Caco-2 (cell line): ENCODE measurements at regions of chr11 and their contacts with region 1.

Region 1: GRCh38 chr11:61254403-61255025 is 13.5 kb downstream of the PGA5 start:
- DNase-seq: peak; percentile 69 to 78
- H3K4me3 ChIP-seq: no peak overlapping the region
- H3K4me3 Mint-ChIP-seq: no peak overlapping the region
- H3K27ac Mint-ChIP-seq: no peak overlapping the region
- H3K4me1 ChIP-seq: no peaks in the 10 kb centered on the region
- H3K4me1 Mint-ChIP-seq: no peaks in the 10 kb centered on the region
- H3K27me3 ChIP-seq: no peaks in the 10 kb centered on the region
- H3K27me3 Mint-ChIP-seq: no peaks in the 10 kb centered on the region
- CTCF ChIP-seq: peak; percentile 92 to 96

Region 2: DNA sequence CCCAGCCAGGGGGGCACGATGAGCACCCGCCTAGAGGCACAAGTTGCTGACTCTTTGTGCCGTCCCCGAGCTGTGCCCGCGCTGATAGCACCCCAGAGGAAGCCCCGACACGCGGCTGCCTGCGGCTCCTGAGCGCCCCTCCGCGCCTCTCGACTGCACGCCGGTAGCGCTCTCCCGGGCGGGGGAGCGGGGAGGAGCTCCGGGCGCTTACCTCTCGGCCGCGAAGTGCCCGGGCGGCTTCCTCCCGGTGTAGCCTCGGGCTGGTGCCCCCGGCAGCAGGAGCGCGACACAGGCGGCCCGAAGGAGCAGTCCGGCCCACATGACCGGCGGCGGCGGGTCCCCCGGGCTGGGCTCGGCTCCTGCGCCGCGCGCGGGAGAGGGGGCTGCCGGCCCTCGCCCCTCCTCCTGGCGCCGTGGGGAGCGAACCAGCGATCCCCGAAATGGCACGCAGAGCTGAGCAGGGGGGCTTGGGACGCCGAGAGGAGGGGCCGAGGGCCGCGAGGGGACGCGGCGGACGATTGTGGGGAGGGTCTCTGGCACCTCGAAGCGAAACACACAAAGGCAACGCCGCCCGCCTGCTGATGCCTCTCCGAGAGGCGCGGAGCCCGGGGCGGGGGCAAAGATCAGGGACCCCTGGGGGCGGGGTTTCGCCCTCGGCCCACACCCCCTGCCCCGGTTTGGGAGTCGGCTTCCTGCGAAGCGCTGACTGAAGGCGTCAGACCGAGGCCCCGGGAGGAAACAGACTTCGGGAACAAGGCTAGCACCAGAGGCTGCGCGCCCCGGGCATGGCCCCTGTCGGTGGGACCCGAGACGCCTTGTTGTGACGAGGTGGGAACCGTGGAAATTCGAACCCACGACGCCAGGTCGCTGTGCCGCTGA is 40.4 kb after region 1 on chr11 and contains the start of gene VWCE:
- CTCF ChIA-PET with region 1: interaction called, 4 read pairs
- POLR2A ChIA-PET with region 1: no interaction called
- intact Hi-C with region 1: loop called (anchors 1 kb)
- DNase-seq: peak; percentile 71 to 82
- H3K4me3 ChIP-seq: peak within 1 kb of the TSS; percentile 80
- H3K4me3 Mint-ChIP-seq: peak within 1 kb of the TSS; percentile 96
- H3K27ac Mint-ChIP-seq: peak within 1 kb of the TSS; percentile 88
- H3K4me1 ChIP-seq: peaks cover 32% of the 10 kb centered on the region
- H3K4me1 Mint-ChIP-seq: peaks cover 12% of the 10 kb centered on the region
- H3K27me3 ChIP-seq: no peaks in the 10 kb centered on the region
- H3K27me3 Mint-ChIP-seq: no peaks in the 10 kb centered on the region
- CTCF ChIP-seq: peak; percentile 19 to 41
- total RNA-seq, gene VWCE: 17.7 and 18.6 TPM in 2 replicates

Region 3: DNA sequence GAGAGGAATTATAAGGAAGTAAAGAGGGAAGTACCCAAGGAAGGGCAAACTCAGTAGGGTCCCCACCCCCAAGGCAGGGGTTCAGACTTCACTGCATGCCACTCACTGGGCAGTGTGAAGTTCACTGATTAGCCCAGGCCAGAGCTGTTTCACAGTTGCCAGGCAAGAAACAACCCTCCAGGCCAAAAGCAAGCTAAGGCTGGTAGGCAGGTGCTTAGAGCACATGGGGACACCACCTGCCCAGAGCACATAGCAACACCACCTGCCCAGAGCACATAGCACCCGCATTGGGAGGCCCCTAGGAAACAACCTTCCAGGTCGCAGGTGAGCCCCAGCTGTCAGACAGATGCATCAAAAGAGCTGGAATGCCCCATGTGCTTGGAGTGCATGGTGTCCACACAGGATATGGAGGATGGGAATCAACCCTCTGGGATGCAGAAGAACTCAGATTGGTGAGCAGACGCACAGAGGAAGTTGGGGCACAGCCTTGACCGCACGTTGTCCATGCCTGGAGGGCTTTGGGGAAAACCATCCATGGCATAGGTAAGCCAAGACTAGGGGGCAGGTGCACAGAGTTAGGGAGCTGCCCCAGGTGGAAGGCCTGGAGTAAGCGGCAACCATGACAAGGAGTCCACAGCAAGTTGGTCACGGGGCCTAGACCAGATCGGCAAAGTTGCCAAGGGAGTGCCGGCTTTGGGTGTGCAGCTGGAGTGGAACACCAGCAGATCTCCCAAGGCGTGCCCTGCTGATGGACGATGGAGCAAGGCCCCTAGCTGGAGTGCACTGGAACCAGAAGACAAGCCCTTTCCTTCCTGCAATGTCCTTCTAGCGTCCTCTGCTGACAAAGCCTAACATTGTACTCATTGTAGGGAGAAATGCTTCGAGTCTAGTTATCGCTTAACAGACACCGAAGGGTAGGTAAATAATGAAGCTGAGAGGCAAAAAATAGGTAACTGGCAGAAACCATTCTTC is 130.0 kb after region 1 on chr11:
- CTCF ChIA-PET with region 1: interaction called, 8 read pairs
- POLR2A ChIA-PET with region 1: no interaction called
- intact Hi-C with region 1: loop called (anchors 1 kb)
- DNase-seq: peak in 1 of 2 experiments; percentile 47
- H3K4me3 ChIP-seq: no peak overlapping the region
- H3K4me3 Mint-ChIP-seq: no peak overlapping the region
- H3K27ac Mint-ChIP-seq: no peak overlapping the region
- H3K4me1 ChIP-seq: peaks cover 3% of the 10 kb centered on the region; the same call in 1 of the 2 replicates
- H3K4me1 Mint-ChIP-seq: peaks cover 5% of the 10 kb centered on the region
- H3K27me3 ChIP-seq: no peaks in the 10 kb centered on the region
- H3K27me3 Mint-ChIP-seq: no peaks in the 10 kb centered on the region
- CTCF ChIP-seq: peak in 1 of 2 experiments; percentile 44